ENCODE measurements at regions of chr10 and their contacts with region 1.

Region 1: DNA sequence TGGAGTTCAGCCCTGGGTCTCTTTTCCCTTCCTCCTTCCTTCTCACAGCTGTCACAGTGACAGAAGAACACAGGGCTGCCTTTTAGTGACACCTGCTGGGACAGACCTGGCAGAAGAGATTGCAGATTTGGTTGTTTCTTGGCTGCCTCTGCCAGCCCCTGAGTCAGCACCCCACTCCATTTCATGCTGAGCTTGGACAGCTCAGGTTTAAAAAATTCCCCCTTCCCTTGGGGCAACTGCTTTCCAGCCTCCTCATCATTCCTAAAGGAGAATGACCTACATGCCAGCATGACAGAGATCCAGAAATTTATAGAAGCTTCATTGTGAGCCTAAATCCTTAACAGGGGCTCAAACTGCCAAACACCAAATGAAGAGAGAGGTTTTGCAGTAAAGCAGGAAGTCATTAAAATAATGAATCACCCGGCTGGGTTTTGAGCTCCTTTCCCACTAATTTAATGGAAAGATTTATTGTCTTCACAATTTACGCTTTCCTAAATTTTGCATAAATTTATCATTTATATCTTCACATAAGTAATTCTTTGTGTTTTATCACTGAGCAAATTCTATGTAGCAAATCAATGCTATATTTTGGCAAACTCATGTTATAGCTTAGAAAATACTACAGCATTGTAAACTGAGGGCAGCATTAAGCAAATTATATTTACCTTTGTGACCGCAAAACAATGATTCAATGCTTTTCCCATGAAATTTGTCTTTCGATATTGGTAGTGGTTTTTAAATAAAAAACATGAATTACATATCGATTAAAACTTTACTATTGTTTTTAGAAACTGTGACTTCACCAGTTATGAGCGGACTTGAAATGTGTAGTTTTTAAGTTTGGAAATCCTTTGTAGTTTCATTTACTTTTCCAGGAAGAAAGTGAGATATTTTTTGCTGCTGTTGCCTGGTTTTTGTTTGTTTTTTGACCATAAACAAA is 399.5 kb upstream of the ANKRD30A start:
- DNase-seq: peak; percentile 91
- H3K4me3 Mint-ChIP-seq: no peak overlapping the region
- H3K27ac Mint-ChIP-seq: no peak overlapping the region
- H3K4me1 Mint-ChIP-seq: peaks cover 8% of the 10 kb centered on the region
- H3K27me3 Mint-ChIP-seq: no peaks in the 10 kb centered on the region
- CTCF ChIP-seq: peak; percentile 63

Region 2: GRCh38 chr10:35635576-35635975 is 1090.3 kb before region 1 on chr10:
- CTCF ChIA-PET with region 1: interaction called, 20 read pairs
- POLR2A ChIA-PET with region 1: interaction called, 5 read pairs
- intact Hi-C with region 1: loop called (anchors 1 kb)
- DNase-seq: peak; percentile 79
- H3K4me3 Mint-ChIP-seq: no peak overlapping the region
- H3K27ac Mint-ChIP-seq: no peak overlapping the region
- H3K4me1 Mint-ChIP-seq: peaks cover 23% of the 10 kb centered on the region
- H3K27me3 Mint-ChIP-seq: no peaks in the 10 kb centered on the region
- CTCF ChIP-seq: peak; percentile 87

Region 3: DNA sequence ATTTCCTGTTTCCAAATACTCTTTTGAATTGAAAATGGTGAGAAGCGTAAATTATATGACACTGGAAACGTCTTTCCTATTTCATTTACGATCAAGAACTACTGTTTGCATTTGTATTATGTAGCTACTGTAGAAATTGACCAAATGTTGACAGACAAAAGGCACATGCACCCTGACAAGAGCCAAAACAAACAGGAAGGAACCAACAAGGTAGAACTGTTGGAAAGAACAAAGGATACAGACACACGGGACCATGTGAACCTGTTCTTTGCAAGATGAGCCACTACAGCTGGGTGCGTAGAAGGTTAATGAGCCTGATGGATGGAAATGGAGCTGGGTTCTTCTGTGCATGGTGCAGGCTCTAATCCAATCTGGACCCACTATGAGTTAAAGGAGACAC is 1035.3 kb before region 1 on chr10:
- CTCF ChIA-PET with region 1: no interaction called
- POLR2A ChIA-PET with region 1: no interaction called
- intact Hi-C with region 1: no loop called
- DNase-seq: no peak
- H3K4me3 Mint-ChIP-seq: no peak overlapping the region
- H3K27ac Mint-ChIP-seq: no peak overlapping the region
- H3K4me1 Mint-ChIP-seq: no peaks in the 10 kb centered on the region
- H3K27me3 Mint-ChIP-seq: no peaks in the 10 kb centered on the region
- CTCF ChIP-seq: no peak

Region 4: GRCh38 chr10:35781643-35782035 is 944.2 kb before region 1 on chr10:
- CTCF ChIA-PET with region 1: interaction called, 4 read pairs
- POLR2A ChIA-PET with region 1: interaction called, 6 read pairs
- intact Hi-C with region 1: loop called (anchors 1 kb)
- DNase-seq: peak; percentile 30
- H3K4me3 Mint-ChIP-seq: no peak overlapping the region
- H3K27ac Mint-ChIP-seq: peak overlapping the region; percentile 93
- H3K4me1 Mint-ChIP-seq: peaks cover 34% of the 10 kb centered on the region
- H3K27me3 Mint-ChIP-seq: no peaks in the 10 kb centered on the region
- CTCF ChIP-seq: no peak

Region 5: DNA sequence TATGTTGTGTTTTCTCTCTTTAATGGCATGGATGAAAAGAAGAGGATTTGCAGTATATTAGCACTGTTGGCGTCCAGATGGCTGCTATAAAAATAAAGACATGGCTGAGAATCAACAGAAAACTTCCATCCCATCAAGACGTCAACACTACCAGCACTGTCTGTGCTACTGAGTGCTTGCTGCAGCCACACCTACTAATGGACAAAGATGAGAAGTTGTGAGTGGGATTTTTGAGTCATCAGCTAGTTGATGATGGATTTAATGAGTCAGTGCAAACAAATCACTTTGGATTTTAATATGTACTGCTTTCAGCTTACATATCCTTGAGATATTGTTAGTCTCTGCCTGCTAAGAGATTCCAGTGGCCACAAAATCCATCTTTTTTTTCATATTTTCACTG is 231.5 kb before region 1 on chr10:
- CTCF ChIA-PET with region 1: no interaction called
- POLR2A ChIA-PET with region 1: interaction called, 4 read pairs
- intact Hi-C with region 1: loop called (anchors 1 kb)
- DNase-seq: peak; percentile 67
- H3K4me3 Mint-ChIP-seq: no peak overlapping the region
- H3K27ac Mint-ChIP-seq: peak overlapping the region; percentile 87
- H3K4me1 Mint-ChIP-seq: peaks cover 44% of the 10 kb centered on the region
- H3K27me3 Mint-ChIP-seq: no peaks in the 10 kb centered on the region
- CTCF ChIP-seq: no peak

Region 6: GRCh38 chr10:36712695-36713094 is 13.2 kb before region 1 on chr10:
- CTCF ChIA-PET with region 1: interaction called, 12 read pairs
- POLR2A ChIA-PET with region 1: no interaction called
- intact Hi-C with region 1: no loop called
- DNase-seq: no peak
- H3K4me3 Mint-ChIP-seq: no peak overlapping the region
- H3K27ac Mint-ChIP-seq: no peak overlapping the region
- H3K4me1 Mint-ChIP-seq: no peaks in the 10 kb centered on the region
- H3K27me3 Mint-ChIP-seq: no peaks in the 10 kb centered on the region
- CTCF ChIP-seq: no peak

Measured in MCF 10A (cell line).